Transverse colon (tissue), 4 donors: ENCODE measurements at regions of chr17 and their contacts with region 1.

Region 1: GRCh38 chr17:34998205-34998604 is 17.9 kb downstream of the LIG3 start:
- DNase-seq: peak; percentile 80
- H3K4me3 ChIP-seq: no peak overlapping the region
- H3K27ac ChIP-seq: peak overlapping the region; percentile 66 to 87 (median 76)
- H3K4me1 ChIP-seq: peaks cover 0 to 31% (median 5%) of the 10 kb centered on the region in 4 donors
- H3K27me3 ChIP-seq: no peaks in the 10 kb centered on the region
- CTCF ChIP-seq: peak; percentile 76 to 94 (median 79)
- EP300 ChIP-seq: no peak
- POLR2A ChIP-seq: no peak

Region 2: GRCh38 chr17:35063514-35064223 is 65.5 kb after region 1 on chr17 and contains the start of gene RFFL:
- in situ Hi-C with region 1: loop called in 1 of 4 experiments (anchors 10 kb)
- intact Hi-C with region 1: no loop called
- DNase-seq: peak; percentile 91
- H3K4me3 ChIP-seq: no peak within 1 kb of the TSS
- H3K27ac ChIP-seq: peak within 1 kb of the TSS; percentile 87 to 92 (median 88)
- H3K4me1 ChIP-seq: peaks cover 14 to 32% (median 18%) of the 10 kb centered on the region in 4 donors
- H3K27me3 ChIP-seq: no peaks in the 10 kb centered on the region
- CTCF ChIP-seq: peak in 1 of 5 experiments; percentile 21
- EP300 ChIP-seq: no peak
- POLR2A ChIP-seq: peak; percentile 24
- total RNA-seq, gene RFFL: 40.6 to 75.8 (median 50.7) TPM

Region 3: GRCh38 chr17:35312790-35313711 is 314.8 kb after region 1 on chr17:
- in situ Hi-C with region 1: no loop called
- intact Hi-C with region 1: no loop called
- DNase-seq: peak; percentile 51
- H3K4me3 ChIP-seq: peak overlapping the region in 3 of 4 donors; percentile 6 to 29 (median 14)
- H3K27ac ChIP-seq: peak overlapping the region; percentile 36 to 65 (median 49)
- H3K4me1 ChIP-seq: peaks cover 0 to 11% (median 0%) of the 10 kb centered on the region in 4 donors
- H3K27me3 ChIP-seq: no peaks in the 10 kb centered on the region
- CTCF ChIP-seq: peak; percentile 74 to 79 (median 75)
- EP300 ChIP-seq: no peak
- POLR2A ChIP-seq: peak; percentile 18